Spleen (tissue), 13 donors: ENCODE measurements at regions of chr2 and their contacts with region 1.

Region 1: GRCh38 chr2:56183643-56184499 is at the start of gene CCDC85A:
- DNase-seq: peak; percentile 91
- H3K4me3 ChIP-seq: peak within 1 kb of the TSS; percentile 53 to 82 (median 60)
- H3K27ac ChIP-seq: peak within 1 kb of the TSS in 4 of 8 donors; percentile 66 to 80 (median 77)
- H3K4me1 ChIP-seq: peaks cover 0 to 30% (median 23%) of the 10 kb centered on the region in 6 donors
- H3K27me3 ChIP-seq: peaks cover 0 to 93% (median 44%) of the 10 kb centered on the region in 7 donors
- CTCF ChIP-seq: peak; percentile 45 to 90 (median 83)
- POLR2A ChIP-seq: no peak
- total RNA-seq, gene CCDC85A: 0.34 to 2.6 (median 1.5) TPM

Region 2: GRCh38 chr2:56749152-56749752 is 565.4 kb after region 1 on chr2:
- intact Hi-C with region 1: loop called (anchors 10 kb)
- DNase-seq: no peak
- H3K4me3 ChIP-seq: no peak overlapping the region
- H3K27ac ChIP-seq: no peak overlapping the region
- H3K4me1 ChIP-seq: no peaks in the 10 kb centered on the region
- H3K27me3 ChIP-seq: no peaks in the 10 kb centered on the region
- CTCF ChIP-seq: peak in 6 of 11 experiments; percentile 12 to 38 (median 29)
- POLR2A ChIP-seq: no peak

Region 3: DNA sequence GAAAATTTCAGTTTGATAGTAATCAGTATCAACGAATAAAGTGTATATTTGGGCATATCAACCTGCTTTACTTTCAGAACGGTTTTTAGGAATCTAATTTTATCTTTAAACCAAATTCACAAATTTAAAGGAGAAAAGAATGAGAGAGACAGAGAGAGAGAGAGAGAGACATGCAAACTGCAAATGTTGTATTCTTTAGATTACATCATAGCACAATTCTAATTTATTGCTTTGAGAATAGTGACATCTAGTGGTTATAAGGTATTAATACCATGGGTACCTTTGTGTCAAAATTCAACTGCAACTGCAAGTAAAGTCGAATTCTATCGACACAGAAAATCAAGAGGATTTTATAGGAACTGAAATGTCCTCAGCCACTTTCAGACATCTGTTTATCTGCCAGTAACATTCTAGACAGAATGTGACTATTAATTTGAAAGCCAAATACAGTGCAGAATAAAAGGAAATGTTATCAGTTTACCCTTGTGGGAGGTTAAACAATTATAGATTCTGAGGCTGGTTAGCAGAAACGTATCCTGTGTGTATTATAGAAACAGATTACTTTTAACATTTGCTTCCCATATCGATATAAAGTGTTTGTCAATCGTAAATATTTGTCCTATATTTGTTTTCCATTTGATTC is 1332.9 kb after region 1 on chr2:
- intact Hi-C with region 1: loop called (anchors 10 kb)
- DNase-seq: no peak
- H3K4me3 ChIP-seq: no peak overlapping the region
- H3K27ac ChIP-seq: no peak overlapping the region
- H3K4me1 ChIP-seq: no peaks in the 10 kb centered on the region
- H3K27me3 ChIP-seq: no peaks in the 10 kb centered on the region
- CTCF ChIP-seq: peak; percentile 25 to 76 (median 60)
- POLR2A ChIP-seq: no peak